Natural killer cell (primary cell): ENCODE measurements at regions of chr17 and their contacts with region 1.

Region 1: DNA sequence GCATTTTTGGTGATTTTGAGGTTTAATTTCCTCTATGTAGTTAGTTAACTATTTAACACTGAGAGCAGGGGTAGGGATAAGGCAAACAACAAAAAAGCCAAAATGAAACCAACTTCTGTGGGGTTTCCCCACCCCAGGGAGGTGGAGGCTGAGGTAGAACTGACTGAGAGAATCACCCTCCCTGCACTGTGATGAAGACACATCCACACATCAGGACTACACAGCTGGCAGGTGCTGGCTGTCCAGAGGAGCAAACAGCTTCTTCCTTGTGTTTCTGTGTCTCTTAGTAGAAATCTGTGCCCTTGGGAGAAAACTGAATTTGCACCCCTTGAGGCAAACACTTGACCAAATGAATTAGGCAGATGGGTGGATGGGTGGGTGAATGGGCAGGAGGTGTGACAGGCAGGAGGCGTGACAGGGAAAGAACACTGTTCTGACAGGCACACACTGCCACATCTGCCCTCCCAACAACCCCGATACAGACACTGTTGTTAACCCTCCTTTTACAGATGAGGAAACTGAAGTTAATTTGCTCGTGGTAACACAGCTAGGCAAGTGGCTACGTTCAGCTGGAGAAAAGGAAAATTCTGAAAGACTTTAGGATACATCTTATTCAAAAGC is 62.9 kb upstream of the AMZ2 start:
- DNase-seq: peak; percentile 52 to 87
- ATAC-seq: peak; percentile 69 to 88 (median 77)
- H3K4me3 ChIP-seq: no peak overlapping the region
- H3K4me3 Mint-ChIP-seq: peak overlapping the region; percentile 92
- H3K27ac ChIP-seq: peak overlapping the region; percentile 80
- H3K27ac Mint-ChIP-seq: peak overlapping the region; percentile 94 to 95
- H3K4me1 ChIP-seq: peaks cover 56% of the 10 kb centered on the region
- H3K4me1 Mint-ChIP-seq: peaks cover 47 to 56% of the 10 kb centered on the region in 2 donors
- H3K27me3 ChIP-seq: no peaks in the 10 kb centered on the region
- H3K27me3 Mint-ChIP-seq: no peaks in the 10 kb centered on the region
- CTCF ChIP-seq: no peak

Region 2: GRCh38 chr17:67765623-67766022 is 419.3 kb before region 1 on chr17:
- intact Hi-C with region 1: no loop called
- DNase-seq: no peak
- ATAC-seq: no peak
- H3K4me3 ChIP-seq: no peak overlapping the region
- H3K4me3 Mint-ChIP-seq: no peak overlapping the region
- H3K27ac ChIP-seq: no peak overlapping the region
- H3K27ac Mint-ChIP-seq: no peak overlapping the region
- H3K4me1 ChIP-seq: no peaks in the 10 kb centered on the region
- H3K4me1 Mint-ChIP-seq: no peaks in the 10 kb centered on the region
- H3K27me3 ChIP-seq: no peaks in the 10 kb centered on the region
- H3K27me3 Mint-ChIP-seq: no peaks in the 10 kb centered on the region
- CTCF ChIP-seq: no peak

Region 3: DNA sequence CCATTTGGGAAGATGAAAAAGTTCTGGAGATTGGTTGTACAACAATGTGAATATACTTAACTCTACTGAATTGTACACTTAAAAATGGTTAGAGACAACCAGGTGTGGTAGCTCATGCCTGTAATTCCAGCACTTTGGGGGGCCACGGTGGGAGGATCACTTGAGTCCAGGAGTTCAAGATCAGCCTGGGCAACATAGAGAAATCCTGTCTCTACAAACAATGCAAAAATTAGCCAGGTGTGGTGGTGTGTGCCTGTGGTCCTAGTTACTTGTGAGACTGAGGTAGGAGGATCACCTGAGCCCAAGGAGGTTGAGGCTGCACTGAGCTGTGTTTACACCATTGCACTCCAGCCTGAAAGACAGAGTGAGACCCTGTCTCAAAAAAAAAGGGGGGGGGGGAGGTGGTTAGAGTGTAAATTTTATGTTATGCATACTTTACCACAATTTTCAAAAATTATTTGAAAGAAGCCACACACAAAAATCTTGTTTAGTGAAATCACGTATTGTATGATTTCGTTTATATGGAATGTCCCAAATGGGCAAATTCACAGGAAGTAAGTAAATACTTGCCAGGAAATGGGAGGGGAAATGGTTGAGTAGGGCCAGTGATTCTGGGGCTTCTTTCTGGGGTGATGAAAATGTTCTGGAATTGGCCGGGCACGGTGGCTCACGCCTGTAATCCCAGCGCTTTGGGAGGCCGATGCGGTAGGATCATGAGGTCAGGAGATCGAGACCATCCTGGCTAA is 25.8 kb after region 1 on chr17:
- intact Hi-C with region 1: loop called (anchors 5 kb)
- DNase-seq: no peak
- ATAC-seq: no peak
- H3K4me3 ChIP-seq: no peak overlapping the region
- H3K4me3 Mint-ChIP-seq: no peak overlapping the region
- H3K27ac ChIP-seq: no peak overlapping the region
- H3K27ac Mint-ChIP-seq: peak overlapping the region; percentile 52 to 84
- H3K4me1 ChIP-seq: peaks cover 23% of the 10 kb centered on the region
- H3K4me1 Mint-ChIP-seq: peaks cover 58 to 65% of the 10 kb centered on the region in 2 donors
- H3K27me3 ChIP-seq: no peaks in the 10 kb centered on the region
- H3K27me3 Mint-ChIP-seq: no peaks in the 10 kb centered on the region
- CTCF ChIP-seq: no peak

Region 4: GRCh38 chr17:68255731-68256538 is 71.0 kb after region 1 on chr17:
- intact Hi-C with region 1: loop called (anchors 1 kb)
- DNase-seq: peak in 1 of 2 donors; percentile 64
- ATAC-seq: peak; percentile 20 to 46 (median 30)
- H3K4me3 ChIP-seq: no peak overlapping the region
- H3K4me3 Mint-ChIP-seq: peak overlapping the region; percentile 93
- H3K27ac ChIP-seq: peak overlapping the region; percentile 98
- H3K27ac Mint-ChIP-seq: peak overlapping the region; percentile 97 to 100
- H3K4me1 ChIP-seq: peaks cover 67% of the 10 kb centered on the region
- H3K4me1 Mint-ChIP-seq: peaks cover 72 to 73% of the 10 kb centered on the region in 2 donors
- H3K27me3 ChIP-seq: no peaks in the 10 kb centered on the region
- H3K27me3 Mint-ChIP-seq: no peaks in the 10 kb centered on the region
- CTCF ChIP-seq: no peak